Activated CD4-positive, alpha-beta T cell treated with anti-CD3 and anti-CD28 coated beads for 36 hours (primary cell): ENCODE measurements at regions of chr6 and their contacts with region 1.

Region 1: DNA sequence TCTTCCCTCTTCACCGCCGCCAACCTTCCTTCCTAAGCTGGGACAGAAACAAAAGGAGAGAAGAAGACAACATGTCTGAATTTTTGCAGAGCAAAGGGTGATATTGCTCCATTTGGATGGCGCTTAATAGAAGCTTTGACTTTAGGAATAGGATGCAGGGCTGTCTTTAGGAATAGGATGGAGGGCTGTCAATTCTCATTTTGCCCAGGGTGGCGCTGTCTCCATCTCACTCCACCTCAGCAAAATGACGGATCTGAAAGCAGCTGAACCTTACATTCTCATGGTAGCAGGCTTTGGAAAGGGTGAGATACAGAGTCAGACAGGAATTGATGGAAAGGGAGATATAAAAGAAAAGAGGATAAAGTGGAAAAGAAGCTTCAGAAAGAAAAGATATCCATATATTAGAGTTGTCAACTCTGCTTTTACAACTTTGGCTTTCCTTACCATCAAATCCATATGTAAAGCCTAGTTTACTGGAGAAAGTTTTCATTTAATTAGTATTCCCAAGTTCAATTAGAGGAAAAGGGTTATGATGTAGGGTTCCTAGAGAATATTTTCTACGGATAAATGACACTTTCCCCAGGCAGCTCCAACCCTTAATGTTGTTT is 2.4 kb downstream of the MTCL3 start:
- DNase-seq: peak; percentile 69
- ATAC-seq: peak; percentile 59
- H3K4me3 Mint-ChIP-seq: peak overlapping the region; percentile 87
- H3K27ac Mint-ChIP-seq: peak overlapping the region; percentile 58
- H3K4me1 Mint-ChIP-seq: peaks cover 40% of the 10 kb centered on the region
- H3K27me3 Mint-ChIP-seq: peaks cover 49% of the 10 kb centered on the region

Region 2: DNA sequence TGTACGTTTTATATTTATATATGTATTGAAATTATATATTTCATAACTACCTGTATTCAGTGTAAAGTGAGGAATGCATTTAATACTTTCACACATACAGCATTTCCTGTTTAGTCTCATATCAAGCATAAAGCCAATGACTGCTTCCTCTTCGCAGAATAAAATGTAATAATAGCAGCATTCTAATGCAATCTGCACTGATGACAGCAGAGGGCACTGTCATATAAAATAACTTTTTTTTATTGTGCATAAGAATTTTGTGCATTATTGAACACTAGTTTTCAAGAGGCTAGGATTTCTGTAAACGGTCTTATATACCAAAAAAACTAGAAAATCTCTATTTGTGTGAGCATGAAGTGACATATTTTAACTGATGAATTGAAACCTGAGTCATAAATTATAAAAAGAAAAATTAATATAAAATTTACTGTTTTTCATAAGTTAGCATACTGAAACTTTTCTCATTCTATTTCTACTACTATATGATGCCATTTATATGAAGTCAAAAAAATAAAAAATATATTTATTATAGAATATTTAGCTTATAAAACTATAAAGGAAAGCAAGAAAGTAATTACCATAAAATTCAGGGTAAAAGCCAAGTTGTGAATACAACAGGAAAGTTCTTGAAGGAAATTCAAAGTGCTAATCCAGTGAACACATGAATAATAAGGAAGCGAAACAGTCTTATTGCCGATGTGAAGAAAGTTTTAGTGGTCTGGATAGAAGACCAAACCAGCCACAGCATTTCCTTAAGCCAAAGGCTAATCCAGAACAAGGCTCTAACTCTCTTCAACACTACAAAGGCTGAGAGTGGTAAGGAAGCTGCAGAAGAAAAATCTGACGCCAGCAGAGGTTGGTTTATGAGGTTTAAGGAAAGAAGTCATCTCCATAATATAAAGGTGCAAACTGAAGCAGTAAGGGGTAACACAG is 213.8 kb before region 1 on chr6:
- CTCF ChIA-PET with region 1: interaction called, 12 read pairs
- POLR2A ChIA-PET with region 1: no interaction called
- intact Hi-C with region 1: loop called (anchors 5 kb)
- DNase-seq: peak; percentile 56
- ATAC-seq: peak; percentile 67
- H3K4me3 Mint-ChIP-seq: no peak overlapping the region
- H3K27ac Mint-ChIP-seq: no peak overlapping the region
- H3K4me1 Mint-ChIP-seq: peaks cover 39% of the 10 kb centered on the region
- H3K27me3 Mint-ChIP-seq: no peaks in the 10 kb centered on the region

Region 3: DNA sequence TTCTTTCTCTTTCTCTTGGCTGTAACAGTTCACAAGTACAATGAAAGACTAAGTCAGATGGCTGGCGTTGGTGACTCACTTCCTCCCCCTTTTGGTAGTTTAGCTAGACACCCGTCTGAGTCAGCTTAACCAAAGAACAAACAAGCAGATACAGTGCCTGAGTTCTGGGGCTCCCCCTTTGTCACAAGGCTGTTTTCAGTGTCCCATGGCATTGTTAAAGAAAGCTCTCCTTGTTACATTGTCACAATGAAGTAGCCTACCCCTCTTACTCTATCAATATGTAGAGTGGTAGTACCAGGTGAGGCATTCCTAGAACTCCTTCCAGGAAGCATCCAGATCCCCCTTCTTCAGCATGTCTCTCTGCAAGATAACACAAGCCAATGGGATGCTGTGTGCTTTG is 96.2 kb before region 1 on chr6:
- CTCF ChIA-PET with region 1: interaction called, 10 read pairs
- POLR2A ChIA-PET with region 1: interaction called, 3 read pairs
- intact Hi-C with region 1: loop called (anchors 1 to 5 kb)
- DNase-seq: peak; percentile 89
- ATAC-seq: peak; percentile 99
- H3K4me3 Mint-ChIP-seq: peak overlapping the region; percentile 28
- H3K27ac Mint-ChIP-seq: peak overlapping the region; percentile 75
- H3K4me1 Mint-ChIP-seq: peaks cover 23% of the 10 kb centered on the region
- H3K27me3 Mint-ChIP-seq: no peaks in the 10 kb centered on the region

Region 4: GRCh38 chr6:127484212-127484858 is 32.4 kb before region 1 on chr6:
- CTCF ChIA-PET with region 1: interaction called, 82 read pairs
- POLR2A ChIA-PET with region 1: no interaction called
- intact Hi-C with region 1: loop called (anchors 1 kb)
- DNase-seq: no peak
- ATAC-seq: peak; percentile 93
- H3K4me3 Mint-ChIP-seq: peak overlapping the region; percentile 55
- H3K27ac Mint-ChIP-seq: peak overlapping the region; percentile 5
- H3K4me1 Mint-ChIP-seq: peaks cover 26% of the 10 kb centered on the region
- H3K27me3 Mint-ChIP-seq: peaks cover 20% of the 10 kb centered on the region

Region 5: GRCh38 chr6:127503022-127503421 is 13.7 kb before region 1 on chr6:
- CTCF ChIA-PET with region 1: interaction called, 36 read pairs
- POLR2A ChIA-PET with region 1: no interaction called
- intact Hi-C with region 1: no loop called
- DNase-seq: no peak
- ATAC-seq: no peak
- H3K4me3 Mint-ChIP-seq: no peak overlapping the region
- H3K27ac Mint-ChIP-seq: no peak overlapping the region
- H3K4me1 Mint-ChIP-seq: no peaks in the 10 kb centered on the region
- H3K27me3 Mint-ChIP-seq: no peaks in the 10 kb centered on the region